Activated CD4-positive, alpha-beta memory T cell treated with anti-CD3 and anti-CD28 coated beads for 36 hours (primary cell): ENCODE measurements at regions of chr6 and their contacts with region 1.

Region 1: GRCh38 chr6:56595490-56596122 is 47.1 kb downstream of the DST start:
- DNase-seq: peak; percentile 64
- H3K4me3 Mint-ChIP-seq: no peak overlapping the region
- H3K27ac Mint-ChIP-seq: no peak overlapping the region
- H3K4me1 Mint-ChIP-seq: peaks cover 30% of the 10 kb centered on the region
- H3K27me3 Mint-ChIP-seq: no peaks in the 10 kb centered on the region

Region 2: GRCh38 chr6:55980627-55981211 is 614.9 kb before region 1 on chr6:
- CTCF ChIA-PET with region 1: no interaction called
- POLR2A ChIA-PET with region 1: no interaction called
- intact Hi-C with region 1: loop called (anchors 5 kb)
- DNase-seq: no peak
- H3K4me3 Mint-ChIP-seq: no peak overlapping the region
- H3K27ac Mint-ChIP-seq: no peak overlapping the region
- H3K4me1 Mint-ChIP-seq: no peaks in the 10 kb centered on the region
- H3K27me3 Mint-ChIP-seq: no peaks in the 10 kb centered on the region

Region 3: DNA sequence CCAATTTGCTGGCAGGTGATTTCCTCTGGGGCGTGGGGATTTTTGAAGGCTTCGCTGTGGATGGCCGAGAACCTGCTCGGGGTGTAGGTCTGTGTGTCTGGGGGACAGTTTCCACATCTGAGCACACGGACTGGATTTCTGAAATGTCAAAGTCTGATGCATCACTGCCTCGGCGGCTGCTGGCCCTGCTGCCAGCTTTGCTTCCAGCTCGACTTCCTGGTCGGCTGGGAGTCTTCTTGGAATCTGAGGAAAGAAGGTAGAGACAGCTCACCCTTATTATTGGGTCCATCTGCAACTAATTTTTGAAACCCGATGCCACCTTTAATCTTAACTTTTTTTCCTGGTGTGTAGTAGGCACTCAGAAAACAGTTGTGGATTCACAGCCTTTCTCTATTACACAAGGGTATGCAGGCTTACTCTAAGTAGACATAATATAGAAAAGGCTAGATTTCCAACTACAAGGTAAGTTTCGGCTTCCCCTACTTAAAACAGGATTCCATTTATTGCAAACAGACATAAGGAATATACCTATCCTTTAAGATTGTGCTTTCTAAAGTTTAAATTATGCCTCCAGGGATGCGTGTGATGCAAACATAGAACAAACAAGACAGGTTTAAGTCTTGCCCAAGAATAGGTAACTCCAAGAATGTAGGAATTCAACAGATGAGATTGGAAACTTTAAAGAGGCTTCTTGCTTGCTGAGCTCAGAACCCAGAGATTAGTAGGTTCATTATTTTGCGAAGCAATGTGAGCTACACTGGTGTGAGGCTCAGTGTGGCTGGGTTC is 136.4 kb before region 1 on chr6:
- CTCF ChIA-PET with region 1: no interaction called
- POLR2A ChIA-PET with region 1: no interaction called
- intact Hi-C with region 1: loop called (anchors 2 kb)
- DNase-seq: no peak
- H3K4me3 Mint-ChIP-seq: no peak overlapping the region
- H3K27ac Mint-ChIP-seq: no peak overlapping the region
- H3K4me1 Mint-ChIP-seq: peaks cover 8% of the 10 kb centered on the region
- H3K27me3 Mint-ChIP-seq: no peaks in the 10 kb centered on the region

Region 4: DNA sequence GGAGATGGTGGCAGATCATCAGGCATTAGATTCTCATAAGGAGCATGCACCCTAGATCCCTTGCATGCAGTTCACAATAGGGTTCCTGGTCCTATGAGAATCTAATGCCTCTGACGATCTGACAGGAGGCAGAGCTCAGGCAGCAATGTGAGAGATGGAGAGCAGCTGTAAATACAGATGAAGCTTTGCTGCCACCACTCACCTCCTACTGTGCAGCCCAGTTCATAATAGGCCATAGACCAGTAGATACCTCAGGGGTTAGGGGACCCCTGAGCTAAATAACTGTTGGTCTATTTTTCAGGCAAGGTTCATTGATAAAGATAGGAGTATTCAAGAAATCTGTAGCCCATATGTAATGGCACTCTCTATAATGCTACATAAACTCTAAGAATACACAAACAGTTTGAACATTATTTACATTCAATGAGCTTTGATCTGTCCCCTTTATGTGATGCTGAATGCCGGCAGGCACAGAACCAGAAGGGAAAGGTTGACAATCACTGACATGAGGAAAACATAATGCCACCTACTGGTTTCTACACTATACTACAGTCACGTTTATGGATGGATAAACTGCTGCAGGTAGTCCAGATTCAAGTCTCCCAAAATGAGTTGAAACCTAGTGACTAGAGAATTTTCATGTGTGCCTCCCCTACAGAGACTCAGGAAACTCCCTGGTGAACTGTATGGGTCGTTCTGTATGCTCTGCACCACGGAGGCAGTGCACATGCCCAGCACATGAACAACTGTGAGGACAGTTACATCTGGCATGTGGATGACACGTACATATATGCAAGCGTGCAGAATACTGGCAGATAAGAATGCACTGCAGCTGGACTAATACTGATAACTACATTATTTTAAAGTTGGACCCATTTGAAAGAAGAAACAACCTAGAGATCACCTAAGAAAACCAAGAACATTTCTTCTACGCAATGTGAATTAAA is 24.9 kb before region 1 on chr6:
- CTCF ChIA-PET with region 1: interaction called, 16 read pairs
- POLR2A ChIA-PET with region 1: no interaction called
- intact Hi-C with region 1: no loop called
- DNase-seq: no peak
- H3K4me3 Mint-ChIP-seq: no peak overlapping the region
- H3K27ac Mint-ChIP-seq: no peak overlapping the region
- H3K4me1 Mint-ChIP-seq: no peaks in the 10 kb centered on the region
- H3K27me3 Mint-ChIP-seq: peaks cover 4% of the 10 kb centered on the region

Region 5: GRCh38 chr6:57267586-57268293 is 672.1 kb after region 1 on chr6:
- CTCF ChIA-PET with region 1: no interaction called
- POLR2A ChIA-PET with region 1: no interaction called
- intact Hi-C with region 1: loop called (anchors 1 kb)
- DNase-seq: peak; percentile 50
- H3K4me3 Mint-ChIP-seq: no peak overlapping the region
- H3K27ac Mint-ChIP-seq: no peak overlapping the region
- H3K4me1 Mint-ChIP-seq: peaks cover 11% of the 10 kb centered on the region
- H3K27me3 Mint-ChIP-seq: peaks cover 12% of the 10 kb centered on the region